Psoas muscle (tissue), 8 donors: ENCODE measurements at regions of chr4 and their contacts with region 1.

Region 1: DNA sequence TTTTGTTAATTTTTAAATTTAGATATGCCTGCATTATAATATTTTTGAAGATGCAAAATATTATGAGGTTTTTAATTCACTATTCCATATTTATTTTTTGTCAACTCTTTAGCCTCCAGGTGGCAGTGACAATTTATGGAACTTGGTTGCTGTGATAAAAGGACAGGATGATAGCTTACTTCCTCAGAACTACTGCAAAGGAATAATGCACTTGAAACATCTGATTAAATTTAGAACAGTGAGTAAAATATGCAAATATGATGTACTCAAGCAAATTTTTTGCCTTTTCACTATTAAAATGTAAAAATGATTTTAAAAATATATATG is 45.1 kb downstream of the SPATA4 start:
- DNase-seq: no peak
- ATAC-seq: peak; percentile 63 to 94 (median 80)
- H3K4me3 ChIP-seq: no peak overlapping the region
- H3K27ac ChIP-seq: peak overlapping the region; percentile 48
- H3K4me1 ChIP-seq: peaks cover 2% of the 10 kb centered on the region
- H3K27me3 ChIP-seq: no peaks in the 10 kb centered on the region
- CTCF ChIP-seq: peak; percentile 60

Region 2: GRCh38 chr4:175339100-175339707 is 811.1 kb before region 1 on chr4:
- intact Hi-C with region 1: no loop called
- DNase-seq: no peak
- ATAC-seq: no peak
- H3K4me3 ChIP-seq: no peak overlapping the region
- H3K27ac ChIP-seq: no peak overlapping the region
- H3K4me1 ChIP-seq: no peaks in the 10 kb centered on the region
- H3K27me3 ChIP-seq: no peaks in the 10 kb centered on the region
- CTCF ChIP-seq: no peak

Region 3: DNA sequence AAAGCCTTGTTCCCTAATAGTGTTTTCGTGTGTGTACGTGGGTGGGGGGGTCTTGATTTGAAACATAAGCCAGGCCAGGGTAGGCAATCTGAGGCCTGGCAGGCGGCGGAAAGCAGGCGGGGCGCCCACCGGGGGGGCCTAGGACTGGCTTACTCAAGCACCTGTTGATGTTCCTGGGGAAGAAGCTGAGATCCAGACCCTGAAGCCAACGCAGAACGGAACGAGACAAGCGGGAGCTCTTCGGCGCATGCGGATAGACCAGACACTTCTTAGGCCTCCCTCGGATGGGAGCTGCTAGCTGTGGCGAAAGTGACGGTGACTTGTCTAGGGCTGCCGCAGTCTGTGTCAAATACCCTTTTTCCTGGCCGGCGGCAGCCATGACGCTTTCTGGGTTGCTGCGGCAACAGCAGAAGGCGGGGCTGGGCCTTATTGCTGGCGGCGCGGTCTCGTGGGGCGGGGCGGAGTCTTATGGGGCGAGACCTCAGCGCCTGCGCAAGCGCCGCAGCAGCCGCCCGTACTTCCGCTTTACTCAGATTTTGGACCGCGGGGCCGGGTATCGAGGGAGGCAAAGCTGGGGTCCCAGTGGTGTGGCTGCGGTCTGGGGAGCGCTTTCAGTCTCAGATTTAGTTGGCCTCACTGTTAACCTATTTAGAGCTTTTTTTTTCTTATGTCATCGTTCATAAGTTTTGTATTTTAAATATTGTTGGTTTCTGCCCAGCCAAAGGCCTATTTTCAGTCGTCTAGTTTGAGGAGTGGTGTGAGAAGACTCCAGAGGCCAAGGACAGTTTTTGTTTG is 45.1 kb after region 1 on chr4 and contains the start of gene SPATA4:
- intact Hi-C with region 1: loop called in 1 of 2 experiments (anchors 5 kb)
- DNase-seq: peak; percentile 94 to 98
- ATAC-seq: peak; percentile 95 to 98 (median 96)
- H3K4me3 ChIP-seq: peak within 1 kb of the TSS; percentile 76
- H3K27ac ChIP-seq: peak within 1 kb of the TSS; percentile 90
- H3K4me1 ChIP-seq: peaks cover 21% of the 10 kb centered on the region
- H3K27me3 ChIP-seq: no peaks in the 10 kb centered on the region
- CTCF ChIP-seq: no peak
- total RNA-seq, gene SPATA4: 0.38 to 1.7 (median 0.74) TPM

Region 4: DNA sequence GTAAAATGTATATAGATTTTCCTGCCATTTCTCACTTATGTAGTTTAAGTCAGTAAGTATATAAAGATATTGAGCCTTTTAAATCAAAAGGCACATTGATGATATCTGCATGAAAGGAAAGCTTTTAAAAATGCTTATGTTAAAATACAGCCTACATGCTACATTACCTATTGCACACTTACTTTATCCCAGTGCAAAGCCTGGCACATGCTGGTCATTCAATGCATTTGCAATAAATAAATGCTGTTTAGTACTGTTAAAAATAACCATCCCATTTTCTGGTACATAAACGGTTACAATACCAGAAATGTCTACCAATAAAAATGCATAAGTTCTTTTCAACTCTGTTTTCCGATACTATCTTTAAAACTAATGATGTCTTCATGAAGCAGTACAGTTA is 67.2 kb after region 1 on chr4:
- intact Hi-C with region 1: loop called in 1 of 2 experiments (anchors 10 kb)
- DNase-seq: no peak
- ATAC-seq: no peak
- H3K4me3 ChIP-seq: no peak overlapping the region
- H3K27ac ChIP-seq: no peak overlapping the region
- H3K4me1 ChIP-seq: peaks cover 9% of the 10 kb centered on the region
- H3K27me3 ChIP-seq: no peaks in the 10 kb centered on the region
- CTCF ChIP-seq: no peak

Region 5: GRCh38 chr4:176277162-176277904 is 127.0 kb after region 1 on chr4:
- intact Hi-C with region 1: loop called (anchors 1 to 5 kb)
- DNase-seq: peak; percentile 40 to 78
- ATAC-seq: peak; percentile 75 to 85 (median 80)
- H3K4me3 ChIP-seq: peak overlapping the region; percentile 64
- H3K27ac ChIP-seq: peak overlapping the region; percentile 94
- H3K4me1 ChIP-seq: peaks cover 33% of the 10 kb centered on the region
- H3K27me3 ChIP-seq: no peaks in the 10 kb centered on the region
- CTCF ChIP-seq: peak; percentile 62

Region 6: GRCh38 chr4:176319704-176320339 is 169.5 kb after region 1 on chr4 and contains the start of gene SPCS3:
- intact Hi-C with region 1: loop called in 1 of 2 experiments (anchors 1 kb)
- DNase-seq: peak; percentile 97
- ATAC-seq: peak; percentile 97 to 99 (median 98)
- H3K4me3 ChIP-seq: peak within 1 kb of the TSS; percentile 83
- H3K27ac ChIP-seq: peak within 1 kb of the TSS; percentile 98
- H3K4me1 ChIP-seq: peaks cover 35% of the 10 kb centered on the region
- H3K27me3 ChIP-seq: no peaks in the 10 kb centered on the region
- CTCF ChIP-seq: no peak
- total RNA-seq, gene SPCS3: 32.8 to 75.8 (median 52.3) TPM

Region 7: DNA sequence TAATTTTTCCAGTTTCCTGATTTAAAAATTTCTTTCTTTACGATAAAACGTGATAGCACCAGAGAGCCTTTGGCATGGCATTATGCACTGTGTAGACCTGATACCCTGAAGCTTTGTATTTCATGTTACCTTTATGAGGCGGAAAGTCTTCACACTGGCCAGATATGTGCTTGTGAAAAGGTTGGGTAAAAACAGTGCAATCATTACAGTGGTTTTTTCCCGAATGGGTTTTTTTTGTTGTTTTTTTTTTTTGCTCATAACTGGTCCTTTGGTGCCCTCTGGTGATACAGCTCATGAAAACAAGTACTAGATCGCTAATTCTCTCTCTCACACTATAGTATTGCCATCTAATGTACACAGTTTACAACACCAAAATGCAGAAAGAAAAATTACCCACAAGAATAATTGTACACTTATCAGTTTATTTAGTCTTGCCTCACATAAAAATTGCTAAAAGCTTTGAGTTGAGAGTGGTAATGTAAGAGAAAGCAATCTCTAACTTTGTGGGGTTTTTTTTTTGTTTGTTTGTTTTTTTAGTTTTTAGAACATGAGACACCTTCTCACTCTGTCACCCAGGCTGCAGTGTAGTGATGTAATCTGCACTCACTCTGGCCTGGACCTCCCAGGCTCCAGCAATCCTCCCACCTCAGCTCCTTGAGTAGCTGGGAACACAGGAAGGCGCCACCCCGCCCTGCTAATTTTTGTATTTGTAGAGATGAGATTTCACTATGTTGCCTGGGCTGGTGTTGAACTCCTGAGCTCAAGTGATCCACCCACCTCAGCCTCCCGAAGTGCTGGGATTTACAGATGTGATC is 190.8 kb after region 1 on chr4:
- intact Hi-C with region 1: loop called (anchors 2 to 5 kb)
- DNase-seq: no peak
- ATAC-seq: peak; percentile 46 to 85 (median 56)
- H3K4me3 ChIP-seq: peak overlapping the region; percentile 59
- H3K27ac ChIP-seq: no peak overlapping the region
- H3K4me1 ChIP-seq: peaks cover 12% of the 10 kb centered on the region
- H3K27me3 ChIP-seq: no peaks in the 10 kb centered on the region
- CTCF ChIP-seq: peak; percentile 73

Region 8: GRCh38 chr4:176818531-176818930 is 668.2 kb after region 1 on chr4:
- intact Hi-C with region 1: no loop called
- DNase-seq: no peak
- ATAC-seq: no peak
- H3K4me3 ChIP-seq: no peak overlapping the region
- H3K27ac ChIP-seq: no peak overlapping the region
- H3K4me1 ChIP-seq: no peaks in the 10 kb centered on the region
- H3K27me3 ChIP-seq: no peaks in the 10 kb centered on the region
- CTCF ChIP-seq: no peak